Lower leg skin (tissue), 4 donors: ENCODE measurements at regions of chr3 and their contacts with region 1.

Region 1: GRCh38 chr3:195106418-195106906 is 164.5 kb downstream of the XXYLT1 start:
- DNase-seq: peak in 1 of 2 donors; percentile 93
- H3K4me3 ChIP-seq: no peak overlapping the region
- CTCF ChIP-seq: peak in 1 of 3 donors; percentile 62
- POLR2A ChIP-seq: no peak

Region 2: DNA sequence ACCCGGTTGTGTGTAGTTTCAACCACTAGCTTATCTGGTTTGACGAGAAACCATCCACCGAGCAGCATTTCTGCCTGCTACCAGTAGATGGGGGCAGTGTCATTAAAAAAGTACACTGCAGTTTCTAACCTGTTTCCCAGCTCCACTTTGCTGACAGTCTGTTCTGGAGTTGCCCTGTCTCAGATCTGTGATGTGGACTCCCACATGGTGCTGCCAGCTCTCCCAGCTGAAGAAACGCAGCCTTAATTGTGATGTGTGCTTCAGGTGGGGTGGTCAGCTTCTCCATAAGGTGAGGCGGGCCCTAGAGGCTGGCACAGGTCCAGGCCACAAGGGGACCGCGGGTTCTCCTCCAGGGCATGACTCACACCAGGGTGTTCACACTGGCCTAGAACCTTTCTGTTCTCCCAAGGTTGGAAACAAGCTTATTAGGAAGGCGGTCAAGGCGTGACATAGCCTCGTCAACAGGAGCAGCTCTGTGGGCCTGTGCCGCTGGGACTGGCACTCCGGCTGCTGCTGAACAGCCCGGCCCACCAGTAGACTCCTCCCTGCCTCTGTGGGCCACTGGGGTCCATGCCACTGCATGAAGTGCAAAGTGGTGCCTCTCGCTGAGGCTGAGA is 423.7 kb before region 1 on chr3:
- intact Hi-C with region 1: loop called (anchors 5 kb)
- DNase-seq: peak; percentile 77 to 94
- H3K4me3 ChIP-seq: no peak overlapping the region
- CTCF ChIP-seq: peak in 1 of 3 donors; percentile 92
- POLR2A ChIP-seq: no peak

Region 3: DNA sequence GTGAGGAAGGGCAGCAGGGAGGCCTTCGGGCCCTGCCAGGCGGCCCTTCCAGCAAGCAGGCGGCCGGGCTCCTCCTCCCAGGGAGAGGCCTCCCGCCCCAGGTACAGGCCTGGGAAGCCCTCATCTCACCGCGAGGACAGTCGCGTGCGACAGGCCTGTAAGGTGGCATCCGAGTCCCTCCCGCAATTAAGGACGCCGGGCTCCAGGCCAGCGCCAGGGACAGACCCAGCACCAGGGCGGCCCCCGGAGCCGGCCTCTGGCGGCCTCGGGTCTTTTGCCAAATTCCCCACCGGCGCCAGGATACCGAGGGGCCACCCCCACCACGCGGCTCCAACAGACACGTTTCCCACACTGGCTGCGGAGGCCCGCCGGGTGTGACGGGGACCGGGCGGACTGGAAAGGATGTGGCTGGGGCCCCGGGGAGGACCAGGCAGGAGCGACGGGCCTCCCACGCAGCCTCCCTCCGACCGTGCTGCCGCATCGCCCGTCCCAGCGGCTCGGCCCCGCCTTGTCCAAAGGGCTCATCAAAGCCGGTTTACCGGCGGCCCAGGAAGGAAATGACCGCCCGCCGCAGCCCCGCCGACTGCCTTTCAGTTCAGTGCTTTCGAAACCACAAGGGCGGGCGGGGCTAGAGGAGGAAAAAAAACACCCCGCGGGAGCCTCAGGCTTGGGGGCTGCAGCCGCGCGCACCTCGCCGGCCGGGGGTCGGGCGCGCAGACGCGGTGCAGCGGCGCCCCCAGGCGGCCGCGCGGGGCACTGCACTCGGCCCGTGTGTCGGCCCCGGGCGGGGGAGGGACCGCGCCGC is 153.2 kb after region 1 on chr3:
- intact Hi-C with region 1: loop called (anchors 10 kb)
- DNase-seq: peak; percentile 89 to 98
- H3K4me3 ChIP-seq: peak overlapping the region; percentile 16
- CTCF ChIP-seq: no peak
- POLR2A ChIP-seq: no peak